ENCODE measurements at regions of chr7 and their contacts with region 1.

Region 1: DNA sequence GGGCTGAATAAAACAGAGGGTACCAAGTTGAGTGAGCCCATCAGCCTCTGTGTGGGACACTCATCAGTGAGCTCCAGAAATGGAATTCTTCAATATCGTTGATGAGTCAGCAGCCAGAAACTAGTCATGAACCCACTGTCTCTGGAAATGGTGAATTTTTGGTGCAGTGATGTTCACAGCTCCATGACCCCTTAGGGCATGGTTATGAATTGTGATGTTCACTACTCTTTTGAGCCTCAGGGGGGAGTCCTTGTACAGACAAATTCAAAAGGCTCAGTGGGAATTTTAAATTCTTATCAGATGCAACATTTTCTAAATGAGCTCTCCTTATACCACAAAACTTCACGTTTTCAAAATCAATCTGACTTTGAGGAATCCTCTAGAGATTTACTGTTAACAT is 335.7 kb downstream of the PHTF2 start:
- DNase-seq: peak; percentile 88
- ATAC-seq: peak; percentile 86
- H3K4me3 ChIP-seq: no peak overlapping the region
- H3K27ac ChIP-seq: no peak overlapping the region
- H3K4me1 ChIP-seq: peaks cover 3% of the 10 kb centered on the region
- H3K27me3 ChIP-seq: no peaks in the 10 kb centered on the region
- CTCF ChIP-seq: peak; percentile 80
- POLR2A ChIP-seq: 0 out of 2 replicates have a peak, but pooled peaks have one; percentile 35
- RAD21 ChIP-seq: peak; percentile 87

Region 2: DNA sequence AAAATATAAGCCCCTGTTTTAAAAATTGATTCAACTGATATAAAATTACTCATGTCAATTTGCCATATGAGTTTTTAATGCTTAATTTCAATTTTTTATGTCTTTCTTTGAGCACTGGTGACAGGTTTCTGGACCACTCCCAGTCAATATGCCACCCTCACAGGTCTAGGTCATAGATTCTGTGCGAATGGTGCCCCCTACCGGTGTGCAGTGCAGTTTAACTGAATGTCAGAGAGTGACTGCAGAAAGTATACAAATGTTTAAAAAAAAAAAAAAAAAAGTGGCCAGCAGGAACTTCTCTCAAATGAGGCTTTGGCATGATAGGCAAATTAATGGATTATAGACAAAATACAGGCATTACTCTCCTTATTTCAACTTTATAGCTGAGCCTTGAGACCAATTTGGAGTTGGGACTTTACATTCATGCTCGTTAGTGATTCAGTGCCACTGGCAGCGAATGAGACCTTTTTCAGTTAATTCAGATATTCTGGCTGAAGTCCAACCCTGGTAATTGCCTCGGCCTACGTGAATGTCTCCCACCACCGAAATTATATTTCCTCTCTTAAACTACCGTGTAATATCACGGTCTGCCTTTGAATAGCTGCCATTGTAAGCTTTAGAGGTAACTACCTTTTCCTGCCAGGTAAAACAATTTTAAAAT is 91.9 kb after region 1 on chr7:
- CTCF ChIA-PET with region 1: interaction called, 10 read pairs
- POLR2A ChIA-PET with region 1: no interaction called
- dilution Hi-C with region 1: no loop called
- in situ Hi-C with region 1: no loop called
- intact Hi-C with region 1: loop called (anchors 2 kb)
- DNase-seq: peak; percentile 45
- ATAC-seq: peak; percentile 33; the same call in 1 of the 2 replicates
- H3K4me3 ChIP-seq: no peak overlapping the region
- H3K27ac ChIP-seq: peak overlapping the region; percentile 59; the same call in 1 of the 2 replicates
- H3K4me1 ChIP-seq: peaks cover 14% of the 10 kb centered on the region
- H3K27me3 ChIP-seq: no peaks in the 10 kb centered on the region
- CTCF ChIP-seq: peak; percentile 52
- POLR2A ChIP-seq: no peak
- RAD21 ChIP-seq: peak; percentile 47

Region 3: DNA sequence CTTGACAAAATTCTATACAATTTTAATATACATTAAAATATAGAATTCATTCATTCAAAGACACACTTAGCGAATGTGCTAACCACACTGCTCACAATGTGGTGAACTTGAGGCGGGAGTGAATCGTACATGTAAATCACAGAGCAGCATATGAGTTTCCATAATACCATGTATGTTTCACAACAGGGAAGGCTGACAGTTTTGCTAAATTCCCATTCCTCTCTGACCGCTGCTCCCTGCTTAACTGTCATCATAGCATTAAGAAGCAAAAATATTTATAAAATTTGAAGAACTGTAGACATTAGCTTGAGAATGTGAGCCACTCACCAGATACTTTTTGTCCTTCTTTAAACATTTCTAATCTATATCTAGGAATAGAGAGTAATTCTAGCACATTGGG is 555.9 kb after region 1 on chr7:
- CTCF ChIA-PET with region 1: no interaction called
- POLR2A ChIA-PET with region 1: no interaction called
- dilution Hi-C with region 1: no loop called
- in situ Hi-C with region 1: no loop called
- intact Hi-C with region 1: loop called (anchors 10 kb)
- DNase-seq: peak; percentile 69
- ATAC-seq: peak; percentile 90
- H3K4me3 ChIP-seq: no peak overlapping the region
- H3K27ac ChIP-seq: no peak overlapping the region
- H3K4me1 ChIP-seq: no peaks in the 10 kb centered on the region; the same call in 1 of the 2 replicates
- H3K27me3 ChIP-seq: no peaks in the 10 kb centered on the region
- CTCF ChIP-seq: no peak
- POLR2A ChIP-seq: no peak
- RAD21 ChIP-seq: no peak

Region 4: DNA sequence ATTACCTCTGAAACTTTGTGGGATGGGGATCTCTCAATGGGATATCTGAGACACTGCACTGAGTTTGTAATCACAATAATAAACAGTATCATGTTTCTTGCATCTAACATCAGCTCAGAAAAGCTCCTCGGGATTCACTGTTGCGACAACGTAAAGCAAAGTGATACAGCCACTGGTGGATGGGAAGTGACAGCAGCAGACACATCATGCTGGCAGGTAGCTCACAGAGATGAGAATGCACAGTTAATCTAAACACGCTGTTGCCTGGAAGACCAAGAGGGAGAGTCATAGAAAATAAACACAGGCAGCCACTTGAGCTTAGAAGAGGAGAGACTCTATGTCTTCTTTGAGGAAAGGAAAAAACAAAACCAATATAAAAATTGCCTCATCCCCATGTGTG is 805.4 kb after region 1 on chr7:
- CTCF ChIA-PET with region 1: no interaction called
- POLR2A ChIA-PET with region 1: no interaction called
- dilution Hi-C with region 1: no loop called
- in situ Hi-C with region 1: loop called (anchors 25 kb)
- intact Hi-C with region 1: no loop called
- DNase-seq: peak; percentile 78
- ATAC-seq: peak; percentile 75
- H3K4me3 ChIP-seq: no peak overlapping the region
- H3K27ac ChIP-seq: no peak overlapping the region
- H3K4me1 ChIP-seq: no peaks in the 10 kb centered on the region
- H3K27me3 ChIP-seq: no peaks in the 10 kb centered on the region
- CTCF ChIP-seq: no peak
- POLR2A ChIP-seq: no peak
- RAD21 ChIP-seq: no peak